Sigmoid colon (tissue), 7 donors: ENCODE measurements at regions of chr17 and their contacts with region 1.

Region 1: DNA sequence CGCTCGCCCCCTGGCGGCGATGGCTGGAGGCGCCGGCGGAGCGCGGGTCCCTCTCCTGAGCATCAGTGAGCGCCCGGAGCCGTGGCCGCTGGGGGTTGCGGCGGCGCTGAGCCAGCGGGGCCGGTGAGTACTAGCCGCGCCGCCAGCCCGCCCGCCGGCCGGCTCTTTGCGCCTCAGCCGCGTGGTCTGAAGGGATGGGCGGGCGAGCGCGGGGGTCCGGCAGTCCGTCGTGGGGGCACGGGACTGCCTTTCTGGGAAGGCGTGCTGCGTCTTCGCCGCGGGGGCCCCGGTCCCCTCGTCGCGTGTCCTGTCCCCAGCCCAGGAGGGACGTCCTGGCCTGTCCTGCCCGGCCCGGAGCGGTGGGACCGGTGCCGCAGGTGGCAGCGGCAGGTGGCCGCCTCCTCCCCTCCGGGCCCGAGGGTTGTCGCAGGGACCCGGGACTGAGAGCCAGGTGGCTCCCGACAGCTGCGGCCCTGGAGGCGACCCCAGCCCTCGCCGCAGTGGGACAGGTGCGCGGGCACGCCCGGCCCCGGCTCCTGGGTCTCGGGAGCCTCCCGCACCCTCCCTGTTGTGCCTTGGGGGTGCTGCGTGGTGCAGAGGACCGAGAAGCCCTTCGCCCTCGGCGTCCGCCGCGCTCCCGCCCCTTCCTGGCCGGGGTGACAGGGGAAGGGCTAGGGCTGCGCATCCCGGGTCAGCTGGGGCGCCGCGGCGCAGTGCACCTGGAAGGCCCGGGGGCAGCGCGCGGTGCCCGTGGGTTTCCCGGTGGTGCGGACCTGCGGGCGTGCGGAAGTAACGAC is at the start of gene SPECC1:
- DNase-seq: peak; percentile 84
- H3K4me3 ChIP-seq: peak within 1 kb of the TSS; percentile 43 to 64 (median 56)
- H3K27ac ChIP-seq: peak within 1 kb of the TSS; percentile 58 to 82 (median 60)
- H3K4me1 ChIP-seq: peaks cover 0 to 14% (median 10%) of the 10 kb centered on the region in 4 donors
- H3K27me3 ChIP-seq: peaks cover 0 to 45% (median 25%) of the 10 kb centered on the region in 3 donors
- CTCF ChIP-seq: peak in 1 of 4 experiments; percentile 100
- EP300 ChIP-seq: no peak
- POLR2A ChIP-seq: no peak
- total RNA-seq, gene SPECC1: 10.9 to 43.5 (median 17.4) TPM

Region 2: DNA sequence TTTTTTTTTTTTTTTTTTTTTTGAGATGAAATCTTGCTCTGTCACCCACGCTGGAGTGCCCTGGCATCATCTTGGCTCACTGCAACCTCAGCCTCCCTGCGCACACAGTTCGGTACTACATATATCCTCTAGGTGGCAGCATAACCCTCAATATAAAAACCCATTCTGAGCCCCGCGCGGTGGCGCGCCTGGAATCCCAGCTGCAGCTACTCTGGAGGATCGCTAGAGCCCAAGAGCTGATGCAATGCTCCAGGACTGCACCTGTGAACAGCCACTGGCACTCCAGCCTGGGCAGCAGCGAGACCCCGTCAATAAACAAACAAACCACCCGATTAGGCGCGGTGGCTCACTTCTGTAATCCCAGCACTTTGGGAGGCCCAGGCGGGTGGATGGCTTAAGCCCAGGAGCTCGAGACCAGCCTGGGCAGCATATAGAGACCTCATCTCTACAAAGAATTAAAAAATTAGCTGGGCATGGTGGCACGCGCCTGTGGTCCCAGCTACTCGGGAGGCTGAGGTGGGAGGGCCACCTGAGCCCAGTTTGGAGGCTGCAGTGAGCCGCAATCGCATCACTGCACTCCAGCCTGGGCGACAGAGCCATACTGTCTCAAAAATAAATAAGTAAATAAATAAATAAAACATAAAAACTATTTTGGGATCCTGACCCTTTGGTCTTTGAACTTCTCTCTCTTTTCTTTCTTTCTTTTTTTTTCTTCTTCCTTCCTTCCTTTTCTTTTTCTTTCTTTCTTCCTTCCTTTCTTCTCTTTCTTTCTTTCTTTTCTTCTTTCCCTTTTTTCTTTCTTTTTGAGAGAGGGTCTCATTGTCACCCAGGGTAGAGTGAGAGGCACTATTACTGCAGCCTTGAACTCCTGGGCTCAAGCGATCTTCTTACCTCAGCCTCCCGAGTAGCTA is 16.4 kb before region 1 on chr17:
- intact Hi-C with region 1: loop called (anchors 2 kb)
- DNase-seq: peak; percentile 93
- H3K4me3 ChIP-seq: no peak overlapping the region
- H3K27ac ChIP-seq: no peak overlapping the region
- H3K4me1 ChIP-seq: peaks cover 0 to 5% (median 0%) of the 10 kb centered on the region in 4 donors
- H3K27me3 ChIP-seq: no peaks in the 10 kb centered on the region
- CTCF ChIP-seq: peak; percentile 48 to 66 (median 61)
- EP300 ChIP-seq: no peak
- POLR2A ChIP-seq: no peak

Region 3: DNA sequence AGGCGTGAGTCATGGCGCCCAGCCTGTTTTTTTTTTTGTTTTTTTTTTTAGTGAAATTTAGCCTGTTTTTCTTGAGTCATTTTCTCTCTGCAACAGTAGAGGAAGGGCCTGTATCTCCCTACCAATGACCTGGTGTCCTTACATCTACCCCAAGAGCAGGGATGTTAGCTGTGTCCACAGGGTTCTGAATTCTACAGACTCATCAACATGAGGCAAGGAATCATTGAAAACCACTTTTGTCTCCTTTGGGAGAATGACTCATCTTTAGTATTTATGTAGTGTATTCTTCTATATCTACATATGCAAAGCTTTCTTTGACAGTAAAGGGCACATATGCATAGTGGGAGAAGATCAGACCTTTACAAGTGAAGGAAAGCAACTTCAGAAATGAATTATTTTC is 105.0 kb after region 1 on chr17:
- intact Hi-C with region 1: loop called (anchors 5 kb)
- DNase-seq: no peak
- H3K4me3 ChIP-seq: no peak overlapping the region
- H3K27ac ChIP-seq: no peak overlapping the region
- H3K4me1 ChIP-seq: no peaks in the 10 kb centered on the region
- H3K27me3 ChIP-seq: no peaks in the 10 kb centered on the region
- CTCF ChIP-seq: no peak
- EP300 ChIP-seq: no peak
- POLR2A ChIP-seq: no peak